ENCODE measurements at regions of chr1 and their contacts with region 1.

Region 1: GRCh38 chr1:206872139-206872538 is 6.7 kb downstream of the IL20 start:
- DNase-seq: no peak
- H3K4me3 ChIP-seq: no peak overlapping the region
- CTCF ChIP-seq: no peak

Region 2: DNA sequence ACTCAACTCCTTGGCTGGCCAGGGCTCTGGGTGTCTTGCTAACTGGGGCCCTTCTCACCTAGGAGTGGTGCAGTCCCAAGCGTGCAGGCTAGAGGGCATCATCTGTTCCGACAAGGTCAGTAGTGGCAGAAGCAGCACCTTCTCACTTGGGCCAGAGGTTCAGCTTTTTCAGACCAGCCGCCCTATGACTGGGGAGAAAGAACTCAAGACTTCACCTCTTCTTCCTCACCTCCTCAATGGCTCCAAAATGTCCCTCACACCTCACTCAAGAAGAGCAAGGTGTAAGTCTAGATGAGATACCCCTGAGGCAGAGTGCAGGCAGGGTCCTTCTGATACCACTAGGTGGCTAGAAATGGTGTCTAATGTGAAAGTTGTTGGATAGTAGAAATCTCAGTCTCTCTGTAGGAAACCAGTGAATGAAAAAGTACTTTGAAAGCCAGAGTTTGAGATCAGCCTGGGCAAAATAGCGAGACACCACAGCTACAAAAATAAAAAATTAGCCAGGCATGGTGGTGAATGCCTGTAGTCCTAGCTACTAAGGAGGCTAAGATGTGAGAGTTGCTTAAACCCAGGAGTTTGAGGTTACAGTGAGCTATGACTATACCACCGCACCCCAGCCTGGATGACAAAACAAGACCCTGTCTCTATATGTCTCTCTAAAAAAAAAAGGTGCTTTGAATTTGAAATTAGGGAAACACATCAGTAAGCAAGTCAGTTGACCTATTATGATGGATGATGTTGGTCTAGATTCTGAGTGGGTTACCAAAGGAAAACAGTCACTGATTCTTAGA is 15.3 kb before region 1 on chr1:
- CTCF ChIA-PET with region 1: interaction called, 36 read pairs
- POLR2A ChIA-PET with region 1: no interaction called
- DNase-seq: no peak
- H3K4me3 ChIP-seq: no peak overlapping the region
- CTCF ChIP-seq: no peak

Measured in AG04449 (cell line).